ENCODE measurements at regions of chr17 and their contacts with region 1.

Region 1: GRCh38 chr17:42438600-42439567 is 15.8 kb upstream of the CAVIN1 start:
- DNase-seq: peak; percentile 59
- H3K4me3 Mint-ChIP-seq: no peak overlapping the region
- H3K27ac Mint-ChIP-seq: no peak overlapping the region
- H3K4me1 Mint-ChIP-seq: peaks cover 13% of the 10 kb centered on the region
- H3K27me3 Mint-ChIP-seq: peaks cover 14% of the 10 kb centered on the region

Region 2: GRCh38 chr17:42329025-42329976 is 109.6 kb before region 1 on chr17:
- CTCF ChIA-PET with region 1: no interaction called
- POLR2A ChIA-PET with region 1: no interaction called
- DNase-seq: no peak
- H3K4me3 Mint-ChIP-seq: no peak overlapping the region
- H3K27ac Mint-ChIP-seq: peak overlapping the region; percentile 27
- H3K4me1 Mint-ChIP-seq: peaks cover 11% of the 10 kb centered on the region
- H3K27me3 Mint-ChIP-seq: no peaks in the 10 kb centered on the region

Region 3: DNA sequence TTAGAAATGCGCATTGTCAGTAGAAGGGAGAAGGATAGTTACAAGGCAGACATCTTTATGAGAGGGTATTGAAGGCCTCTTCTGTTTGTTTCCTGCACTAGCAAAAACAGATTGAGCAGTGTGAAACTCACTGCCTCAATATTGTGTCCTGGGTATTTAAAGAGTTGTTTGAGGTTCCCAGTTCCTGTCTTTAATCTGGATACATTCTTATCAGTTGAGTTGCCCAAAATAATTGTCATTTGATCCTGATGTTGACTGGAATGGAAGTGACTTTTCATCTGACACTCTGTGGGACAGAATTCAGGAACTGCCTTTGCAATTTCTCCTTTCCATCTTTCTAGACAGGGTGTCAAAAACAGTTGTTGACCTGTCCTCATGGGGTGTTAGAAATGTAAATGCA is 21.5 kb after region 1 on chr17:
- CTCF ChIA-PET with region 1: interaction called, 4 read pairs
- POLR2A ChIA-PET with region 1: interaction called, 10 read pairs
- DNase-seq: no peak
- H3K4me3 Mint-ChIP-seq: peak overlapping the region; percentile 81
- H3K27ac Mint-ChIP-seq: peak overlapping the region; percentile 47
- H3K4me1 Mint-ChIP-seq: peaks cover 41% of the 10 kb centered on the region
- H3K27me3 Mint-ChIP-seq: peaks cover 22% of the 10 kb centered on the region

Region 4: DNA sequence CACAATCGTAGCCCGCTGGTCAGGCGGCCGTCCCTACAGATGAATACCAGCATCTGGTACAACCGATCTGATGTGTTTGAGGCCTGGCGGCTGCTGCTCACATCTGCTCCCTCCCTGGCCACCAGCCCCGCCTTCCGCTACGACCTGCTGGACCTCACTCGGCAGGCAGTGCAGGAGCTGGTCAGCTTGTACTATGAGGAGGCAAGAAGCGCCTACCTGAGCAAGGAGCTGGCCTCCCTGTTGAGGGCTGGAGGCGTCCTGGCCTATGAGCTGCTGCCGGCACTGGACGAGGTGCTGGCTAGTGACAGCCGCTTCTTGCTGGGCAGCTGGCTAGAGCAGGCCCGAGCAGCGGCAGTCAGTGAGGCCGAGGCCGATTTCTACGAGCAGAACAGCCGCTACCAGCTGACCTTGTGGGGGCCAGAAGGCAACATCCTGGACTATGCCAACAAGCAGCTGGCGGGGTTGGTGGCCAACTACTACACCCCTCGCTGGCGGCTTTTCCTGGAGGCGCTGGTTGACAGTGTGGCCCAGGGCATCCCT is 104.7 kb after region 1 on chr17:
- CTCF ChIA-PET with region 1: no interaction called
- POLR2A ChIA-PET with region 1: no interaction called
- DNase-seq: no peak
- H3K4me3 Mint-ChIP-seq: no peak overlapping the region
- H3K27ac Mint-ChIP-seq: no peak overlapping the region
- H3K4me1 Mint-ChIP-seq: peaks cover 27% of the 10 kb centered on the region
- H3K27me3 Mint-ChIP-seq: no peaks in the 10 kb centered on the region

Measured in activated CD4-positive, alpha-beta T cell treated with anti-CD3 and anti-CD28 coated beads, Interleukin-2, amount 10 ng/mL, durations not matched to agents 7 days and 5 days (primary cell).